Right cardiac atrium (tissue), 5 donors: ENCODE measurements at regions of chr4 and their contacts with region 1.

Region 1: GRCh38 chr4:37603070-37603468 is 83.1 kb downstream of the RELL1 start:
- DNase-seq: peak; percentile 77 to 94 (median 94)
- ATAC-seq: peak; percentile 94
- H3K4me3 ChIP-seq: no peak overlapping the region
- H3K27ac ChIP-seq: no peak overlapping the region
- H3K4me1 ChIP-seq: no peaks in the 10 kb centered on the region
- H3K27me3 ChIP-seq: no peaks in the 10 kb centered on the region

Region 2: GRCh38 chr4:37793562-37793961 is 190.5 kb after region 1 on chr4:
- intact Hi-C with region 1: loop called (anchors 2 to 5 kb)
- DNase-seq: no peak
- ATAC-seq: peak; percentile 74 to 84
- H3K4me3 ChIP-seq: no peak overlapping the region
- H3K27ac ChIP-seq: no peak overlapping the region
- H3K4me1 ChIP-seq: no peaks in the 10 kb centered on the region
- H3K27me3 ChIP-seq: no peaks in the 10 kb centered on the region

Region 3: GRCh38 chr4:38034986-38035882 is 432.2 kb after region 1 on chr4:
- intact Hi-C with region 1: loop called in 1 of 4 experiments (anchors 10 kb)
- DNase-seq: no peak
- ATAC-seq: no peak
- H3K4me3 ChIP-seq: no peak overlapping the region
- H3K27ac ChIP-seq: no peak overlapping the region
- H3K4me1 ChIP-seq: no peaks in the 10 kb centered on the region
- H3K27me3 ChIP-seq: no peaks in the 10 kb centered on the region